ENCODE measurements at regions of chr12 and their contacts with region 1.

Region 1: DNA sequence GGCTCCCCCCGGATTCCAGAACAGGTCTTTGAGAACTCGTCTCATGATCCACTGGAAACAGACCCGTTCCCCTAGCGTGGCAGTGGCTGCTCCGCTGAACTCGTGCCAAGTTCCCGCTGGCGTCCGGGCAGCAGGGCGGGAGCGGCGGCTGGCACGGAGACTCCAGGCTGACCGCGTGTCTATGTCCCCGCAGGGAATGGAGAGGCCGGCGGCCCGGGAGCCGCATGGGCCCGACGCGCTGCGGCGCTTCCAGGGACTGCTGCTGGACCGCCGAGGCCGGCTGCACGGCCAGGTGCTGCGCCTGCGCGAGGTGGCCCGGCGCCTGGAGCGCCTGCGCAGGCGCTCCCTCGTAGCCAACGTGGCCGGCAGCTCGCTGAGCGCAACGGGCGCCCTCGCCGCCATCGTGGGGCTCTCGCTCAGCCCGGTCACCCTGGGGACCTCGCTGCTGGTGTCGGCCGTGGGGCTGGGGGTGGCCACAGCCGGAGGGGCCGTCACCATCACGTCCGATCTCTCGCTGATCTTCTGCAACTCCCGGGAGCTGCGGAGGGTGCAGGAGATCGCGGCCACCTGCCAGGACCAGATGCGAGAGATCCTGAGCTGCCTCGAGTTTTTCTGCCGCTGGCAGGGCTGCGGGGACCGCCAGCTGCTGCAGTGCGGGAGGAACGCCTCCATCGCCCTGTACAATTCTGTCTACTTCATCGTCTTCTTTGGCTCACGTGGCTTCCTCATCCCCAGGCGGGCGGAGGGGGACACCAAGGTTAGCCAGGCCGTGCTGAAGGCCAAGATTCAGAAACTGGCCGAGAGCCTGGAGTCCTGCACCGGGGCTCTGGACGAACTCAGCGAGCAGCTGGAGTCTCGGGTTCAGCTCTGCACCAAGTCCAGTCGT is 1.5 kb downstream of the APOLD1 start:
- DNase-seq: peak; percentile 62 to 78 (median 72)
- ATAC-seq: peak; percentile 92
- H3K4me3 ChIP-seq: peak overlapping the region; percentile 86
- H3K4me3 Mint-ChIP-seq: peak overlapping the region; percentile 76 to 89 (median 85)
- H3K27ac ChIP-seq: peak overlapping the region; percentile 78
- H3K27ac Mint-ChIP-seq: peak overlapping the region; percentile 62 to 96 (median 88)
- H3K4me1 ChIP-seq: peaks cover 6 to 9% of the 10 kb centered on the region in 2 donors
- H3K4me1 Mint-ChIP-seq: peaks cover 6 to 35% (median 17%) of the 10 kb centered on the region in 7 donors
- H3K27me3 ChIP-seq: no peaks in the 10 kb centered on the region
- H3K27me3 Mint-ChIP-seq: no peaks in the 10 kb centered on the region

Region 2: GRCh38 chr12:12661086-12661485 is 125.9 kb before region 1 on chr12:
- CTCF ChIA-PET with region 1: no interaction called
- POLR2A ChIA-PET with region 1: no interaction called
- intact Hi-C with region 1: no loop called
- DNase-seq: no peak
- ATAC-seq: no peak
- H3K4me3 ChIP-seq: no peak overlapping the region
- H3K4me3 Mint-ChIP-seq: no peak overlapping the region
- H3K27ac ChIP-seq: no peak overlapping the region
- H3K27ac Mint-ChIP-seq: peak overlapping the region in 1 of 9 donors; percentile 82
- H3K4me1 ChIP-seq: no peaks in the 10 kb centered on the region
- H3K4me1 Mint-ChIP-seq: peaks cover 0 to 3% (median under 1%) of the 10 kb centered on the region in 7 donors
- H3K27me3 ChIP-seq: no peaks in the 10 kb centered on the region
- H3K27me3 Mint-ChIP-seq: no peaks in the 10 kb centered on the region

Region 3: DNA sequence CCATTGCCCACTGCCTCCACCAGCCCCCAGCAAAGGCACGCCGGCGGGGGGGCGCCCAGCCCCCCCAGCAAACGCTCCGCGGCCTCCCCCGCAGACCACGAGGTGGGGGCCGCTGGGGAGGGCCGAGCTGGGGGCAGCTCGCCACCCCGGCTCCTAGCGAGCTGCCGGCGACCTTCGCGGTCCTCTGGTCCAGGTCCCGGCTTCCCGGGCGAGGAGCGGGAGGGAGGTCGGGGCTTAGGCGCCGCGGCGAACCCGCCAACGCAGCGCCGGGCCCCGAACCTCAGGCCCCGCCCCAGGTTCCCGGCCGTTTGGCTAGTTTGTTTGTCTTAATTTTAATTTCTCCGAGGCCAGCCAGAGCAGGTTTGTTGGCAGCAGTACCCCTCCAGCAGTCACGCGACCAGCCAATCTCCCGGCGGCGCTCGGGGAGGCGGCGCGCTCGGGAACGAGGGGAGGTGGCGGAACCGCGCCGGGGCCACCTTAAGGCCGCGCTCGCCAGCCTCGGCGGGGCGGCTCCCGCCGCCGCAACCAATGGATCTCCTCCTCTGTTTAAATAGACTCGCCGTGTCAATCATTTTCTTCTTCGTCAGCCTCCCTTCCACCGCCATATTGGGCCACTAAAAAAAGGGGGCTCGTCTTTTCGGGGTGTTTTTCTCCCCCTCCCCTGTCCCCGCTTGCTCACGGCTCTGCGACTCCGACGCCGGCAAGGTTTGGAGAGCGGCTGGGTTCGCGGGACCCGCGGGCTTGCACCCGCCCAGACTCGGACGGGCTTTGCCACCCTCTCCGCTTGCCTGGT is 70.0 kb before region 1 on chr12 and contains the start of gene CDKN1B:
- CTCF ChIA-PET with region 1: no interaction called
- POLR2A ChIA-PET with region 1: interaction called, 10 read pairs
- intact Hi-C with region 1: no loop called
- DNase-seq: peak; percentile 68 to 91 (median 87)
- ATAC-seq: peak; percentile 77
- H3K4me3 ChIP-seq: peak within 1 kb of the TSS; percentile 94
- H3K4me3 Mint-ChIP-seq: peak within 1 kb of the TSS; percentile 87 to 100 (median 98)
- H3K27ac ChIP-seq: peak within 1 kb of the TSS; percentile 99
- H3K27ac Mint-ChIP-seq: peak within 1 kb of the TSS; percentile 97 to 99 (median 99)
- H3K4me1 ChIP-seq: peaks cover 24 to 39% of the 10 kb centered on the region in 2 donors
- H3K4me1 Mint-ChIP-seq: peaks cover 43 to 66% (median 55%) of the 10 kb centered on the region in 7 donors
- H3K27me3 ChIP-seq: no peaks in the 10 kb centered on the region
- H3K27me3 Mint-ChIP-seq: no peaks in the 10 kb centered on the region
- total RNA-seq, gene CDKN1B: 105 to 205 (median 191) TPM

Region 4: GRCh38 chr12:12803186-12803585 is 16.2 kb after region 1 on chr12:
- CTCF ChIA-PET with region 1: interaction called, 84 read pairs
- POLR2A ChIA-PET with region 1: interaction called, 26 read pairs
- intact Hi-C with region 1: loop called (anchors 1 kb)
- DNase-seq: peak in 3 of 9 donors; percentile 11 to 46 (median 35)
- ATAC-seq: peak; percentile 28
- H3K4me3 ChIP-seq: no peak overlapping the region
- H3K4me3 Mint-ChIP-seq: peak overlapping the region in 3 of 10 donors; percentile 31 to 77 (median 31)
- H3K27ac ChIP-seq: no peak overlapping the region
- H3K27ac Mint-ChIP-seq: peak overlapping the region; percentile 16 to 98 (median 73)
- H3K4me1 ChIP-seq: peaks cover 13 to 17% of the 10 kb centered on the region in 2 donors
- H3K4me1 Mint-ChIP-seq: peaks cover 25 to 64% (median 55%) of the 10 kb centered on the region in 7 donors
- H3K27me3 ChIP-seq: no peaks in the 10 kb centered on the region
- H3K27me3 Mint-ChIP-seq: no peaks in the 10 kb centered on the region

Region 5: GRCh38 chr12:12823292-12823691 is 36.3 kb after region 1 on chr12:
- CTCF ChIA-PET with region 1: no interaction called
- POLR2A ChIA-PET with region 1: no interaction called
- intact Hi-C with region 1: no loop called
- DNase-seq: no peak
- ATAC-seq: no peak
- H3K4me3 ChIP-seq: no peak overlapping the region
- H3K4me3 Mint-ChIP-seq: no peak overlapping the region
- H3K27ac ChIP-seq: no peak overlapping the region
- H3K27ac Mint-ChIP-seq: peak overlapping the region in 2 of 9 donors; percentile 5 to 62
- H3K4me1 ChIP-seq: no peaks in the 10 kb centered on the region
- H3K4me1 Mint-ChIP-seq: peaks cover 9 to 25% (median 24%) of the 10 kb centered on the region in 7 donors
- H3K27me3 ChIP-seq: no peaks in the 10 kb centered on the region
- H3K27me3 Mint-ChIP-seq: no peaks in the 10 kb centered on the region

Region 6: GRCh38 chr12:12837025-12837872 is 50.3 kb after region 1 on chr12:
- CTCF ChIA-PET with region 1: interaction called, 7 read pairs
- POLR2A ChIA-PET with region 1: interaction called, 8 read pairs
- intact Hi-C with region 1: loop called in 1 of 2 experiments (anchors 1 kb)
- DNase-seq: peak in 8 of 9 donors; percentile 34 to 68 (median 52)
- ATAC-seq: peak; percentile 80
- H3K4me3 ChIP-seq: no peak overlapping the region
- H3K4me3 Mint-ChIP-seq: peak overlapping the region; percentile 15 to 74 (median 35)
- H3K27ac ChIP-seq: no peak overlapping the region
- H3K27ac Mint-ChIP-seq: peak overlapping the region; percentile 40 to 95 (median 85)
- H3K4me1 ChIP-seq: peaks cover 0 to 26% of the 10 kb centered on the region in 2 donors
- H3K4me1 Mint-ChIP-seq: peaks cover 11 to 37% (median 34%) of the 10 kb centered on the region in 7 donors
- H3K27me3 ChIP-seq: no peaks in the 10 kb centered on the region
- H3K27me3 Mint-ChIP-seq: no peaks in the 10 kb centered on the region

Region 7: DNA sequence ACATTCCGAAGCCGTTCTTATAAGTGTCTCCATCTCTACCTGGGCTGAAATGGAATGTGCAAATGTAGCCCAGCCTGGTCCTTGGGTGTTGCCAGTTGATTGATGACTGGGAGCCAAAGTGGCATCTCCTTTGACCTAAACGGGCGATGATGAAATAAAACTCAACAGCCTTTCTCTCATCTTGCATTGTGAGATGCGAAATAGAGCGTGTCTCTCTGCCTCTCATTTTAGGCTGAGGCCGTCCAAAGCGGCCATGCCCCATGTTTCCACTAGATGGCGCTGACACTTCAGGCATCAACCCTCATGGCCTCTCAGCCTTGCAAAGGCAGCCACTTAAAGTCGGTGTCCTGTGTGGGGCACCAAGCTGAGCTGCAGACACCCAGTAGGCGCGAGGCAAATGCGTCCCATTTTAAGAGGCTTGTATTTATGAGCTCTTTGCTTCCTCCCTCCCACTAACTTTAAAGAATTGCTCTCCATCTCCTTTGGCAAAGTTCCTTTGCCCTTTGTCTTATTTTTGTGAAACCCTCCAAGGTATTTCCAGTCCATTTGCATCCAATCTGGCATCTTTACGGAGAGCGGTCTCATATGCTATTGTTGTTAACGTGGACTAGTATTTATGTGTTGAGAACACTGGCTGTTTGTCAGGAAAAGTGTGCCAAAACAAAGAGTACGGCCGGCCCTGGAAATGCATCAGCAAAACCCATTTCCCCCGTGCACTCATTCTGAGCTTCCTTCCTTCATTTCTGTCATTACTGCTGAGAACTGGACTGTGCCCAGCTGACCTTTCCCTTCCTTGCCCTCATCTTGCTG is 129.4 kb after region 1 on chr12:
- CTCF ChIA-PET with region 1: interaction called, 22 read pairs
- POLR2A ChIA-PET with region 1: no interaction called
- intact Hi-C with region 1: loop called (anchors 1 kb)
- DNase-seq: peak; percentile 72 to 87 (median 81)
- ATAC-seq: peak; percentile 99
- H3K4me3 ChIP-seq: no peak overlapping the region
- H3K4me3 Mint-ChIP-seq: peak overlapping the region in 7 of 10 donors; percentile 2 to 63 (median 40)
- H3K27ac ChIP-seq: no peak overlapping the region
- H3K27ac Mint-ChIP-seq: peak overlapping the region in 4 of 9 donors; percentile 6 to 55 (median 12)
- H3K4me1 ChIP-seq: peaks cover 0 to 3% of the 10 kb centered on the region in 2 donors
- H3K4me1 Mint-ChIP-seq: peaks cover 9 to 17% (median 11%) of the 10 kb centered on the region in 7 donors
- H3K27me3 ChIP-seq: no peaks in the 10 kb centered on the region
- H3K27me3 Mint-ChIP-seq: peaks cover 0 to 30% (median 10%) of the 10 kb centered on the region in 5 donors

Region 8: DNA sequence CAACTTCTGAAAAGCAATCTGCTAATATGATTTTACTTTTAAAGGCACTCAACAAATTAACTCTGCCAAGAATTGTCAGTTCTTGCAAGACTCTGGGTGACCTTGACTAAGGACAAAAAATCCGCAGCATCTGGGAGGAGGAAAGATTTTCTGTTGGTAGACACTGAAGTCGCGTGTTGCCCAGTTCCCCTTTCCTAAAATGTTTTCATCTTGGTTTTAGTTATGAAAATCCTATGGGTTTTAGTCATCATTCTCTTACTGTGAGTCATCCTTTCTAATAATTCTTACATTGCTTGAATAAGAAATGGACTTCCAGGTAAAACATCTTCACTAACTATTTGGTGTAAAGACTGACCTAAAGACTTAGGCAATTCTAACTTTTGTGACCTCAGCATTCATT is 307.4 kb after region 1 on chr12:
- CTCF ChIA-PET with region 1: interaction called, 3 read pairs
- POLR2A ChIA-PET with region 1: no interaction called
- intact Hi-C with region 1: loop called in 1 of 2 experiments (anchors 1 kb)
- DNase-seq: no peak
- ATAC-seq: no peak
- H3K4me3 ChIP-seq: no peak overlapping the region
- H3K4me3 Mint-ChIP-seq: no peak overlapping the region
- H3K27ac ChIP-seq: no peak overlapping the region
- H3K27ac Mint-ChIP-seq: no peak overlapping the region
- H3K4me1 ChIP-seq: peaks cover 0 to 14% of the 10 kb centered on the region in 2 donors
- H3K4me1 Mint-ChIP-seq: peaks cover 12 to 19% (median 18%) of the 10 kb centered on the region in 7 donors
- H3K27me3 ChIP-seq: no peaks in the 10 kb centered on the region
- H3K27me3 Mint-ChIP-seq: peaks cover 0 to 7% (median 0%) of the 10 kb centered on the region in 5 donors

Measured in naive thymus-derived CD4-positive, alpha-beta T cell (primary cell).